ENCODE measurements at regions of chr1 and their contacts with region 1.

Region 1: DNA sequence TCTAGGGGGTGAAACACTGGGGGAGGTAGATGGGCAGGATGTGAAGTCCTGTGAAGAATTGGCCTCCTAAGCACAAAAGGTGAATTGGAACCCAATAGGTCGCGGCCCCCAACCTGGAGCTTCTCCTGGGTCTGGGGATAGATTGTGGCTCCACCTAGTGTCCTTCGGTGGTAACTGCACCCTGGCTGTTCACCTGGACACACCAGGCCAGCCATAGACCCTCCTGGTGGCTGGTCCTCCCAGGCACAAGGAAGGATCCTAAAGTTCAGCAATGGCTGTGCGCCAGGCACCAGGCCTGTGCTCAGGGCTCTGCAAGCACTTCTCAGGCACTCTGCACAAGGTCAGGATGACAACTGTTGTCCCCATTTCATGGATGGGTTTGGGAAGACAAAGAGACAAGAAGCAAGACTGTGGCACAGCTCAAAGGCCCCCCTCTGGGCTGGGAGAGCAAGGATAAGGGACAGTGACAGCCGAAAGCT is 13.5 kb downstream of the ESPN start:
- H3K4me3 ChIP-seq: no peak overlapping the region
- H3K27ac ChIP-seq: no peak overlapping the region
- H3K4me1 ChIP-seq: no peaks in the 10 kb centered on the region
- CTCF ChIP-seq: peak; percentile 77

Region 2: DNA sequence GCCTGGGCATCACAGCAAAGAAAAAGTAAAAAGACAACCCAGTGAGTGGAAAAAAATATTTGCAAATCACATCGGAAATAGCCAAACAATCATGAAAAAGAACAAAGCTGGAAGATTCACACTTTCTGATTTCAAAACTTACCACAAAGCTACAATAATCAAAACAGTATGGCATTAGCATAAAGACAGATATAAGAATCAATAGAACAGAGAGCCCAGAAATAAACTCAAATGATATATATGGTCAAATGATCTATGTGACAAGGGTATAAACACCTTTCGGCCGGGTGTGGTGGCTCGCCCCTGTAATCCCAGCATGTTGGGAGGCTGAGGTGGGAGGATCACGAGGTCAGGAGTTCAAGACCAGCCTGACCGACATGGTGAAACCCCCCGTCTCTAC is 58.0 kb before region 1 on chr1:
- CTCF ChIA-PET with region 1: no interaction called
- POLR2A ChIA-PET with region 1: no interaction called
- H3K4me3 ChIP-seq: no peak overlapping the region
- H3K27ac ChIP-seq: no peak overlapping the region
- H3K4me1 ChIP-seq: no peaks in the 10 kb centered on the region
- CTCF ChIP-seq: no peak

Region 3: DNA sequence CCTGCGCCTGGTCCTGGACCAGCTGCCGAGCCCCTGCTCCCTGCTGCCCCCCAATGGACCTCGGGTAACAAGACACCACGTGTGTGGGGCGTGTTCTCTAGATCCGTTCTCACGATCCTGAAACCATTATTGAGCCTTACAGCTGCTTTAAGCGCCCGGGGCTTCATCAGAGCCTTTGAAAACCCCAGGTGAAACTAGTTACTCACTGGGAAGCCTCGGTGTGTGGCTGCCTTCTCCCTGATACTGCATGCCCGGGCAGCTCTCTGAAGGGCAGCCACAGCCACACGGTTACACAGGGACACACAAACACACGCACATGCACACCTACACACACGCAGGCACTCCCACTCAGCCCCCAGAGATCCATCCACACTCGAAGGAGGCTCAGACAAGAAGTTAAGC is 23.6 kb before region 1 on chr1:
- CTCF ChIA-PET with region 1: interaction called, 117 read pairs
- POLR2A ChIA-PET with region 1: no interaction called
- H3K4me3 ChIP-seq: no peak overlapping the region
- H3K27ac ChIP-seq: peak overlapping the region; percentile 26; the same call in 1 of the 2 replicates
- H3K4me1 ChIP-seq: no peaks in the 10 kb centered on the region; the same call in 1 of the 2 replicates
- CTCF ChIP-seq: peak; percentile 84

Region 4: DNA sequence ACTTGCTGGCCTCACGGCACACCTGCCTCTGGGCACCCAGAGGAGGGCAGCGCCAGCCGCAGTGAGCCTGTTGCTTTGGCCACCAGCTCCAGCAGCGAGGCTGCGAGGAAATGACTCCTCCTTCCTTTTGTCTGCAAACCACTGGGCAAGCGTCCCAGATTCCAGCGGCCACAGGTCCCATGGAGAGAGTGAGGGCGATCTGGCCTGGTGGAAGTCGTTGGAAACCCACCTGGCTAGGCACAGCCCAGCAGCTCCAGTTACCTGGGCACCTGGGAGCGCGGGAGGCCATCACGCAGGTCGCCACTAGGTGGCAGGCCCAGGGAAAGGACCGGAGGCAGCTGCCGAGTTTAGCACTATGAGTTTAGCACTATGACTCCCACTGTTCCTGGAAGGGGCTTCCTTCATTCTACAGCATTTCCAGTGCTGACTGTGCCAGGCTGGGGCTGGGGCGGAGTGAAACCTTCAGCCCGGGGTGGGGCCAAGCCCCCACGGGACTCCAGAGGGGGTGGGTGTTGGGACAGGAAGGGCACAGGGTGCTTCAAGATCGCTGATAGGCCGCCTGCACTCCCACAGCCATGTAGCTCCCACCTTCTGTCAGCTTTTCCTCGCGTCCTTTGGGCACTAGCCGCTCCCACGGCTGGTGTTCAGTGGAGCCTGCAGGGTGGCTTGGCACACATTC is 14.6 kb before region 1 on chr1:
- CTCF ChIA-PET with region 1: interaction called, 117 read pairs
- POLR2A ChIA-PET with region 1: no interaction called
- H3K4me3 ChIP-seq: no peak overlapping the region
- H3K27ac ChIP-seq: no peak overlapping the region
- H3K4me1 ChIP-seq: no peaks in the 10 kb centered on the region; the same call in 1 of the 2 replicates
- CTCF ChIP-seq: peak; percentile 89

Region 5: GRCh38 chr1:6732942-6733341 is 294.9 kb after region 1 on chr1:
- CTCF ChIA-PET with region 1: no interaction called
- POLR2A ChIA-PET with region 1: no interaction called
- H3K4me3 ChIP-seq: no peak overlapping the region
- H3K27ac ChIP-seq: no peak overlapping the region
- H3K4me1 ChIP-seq: no peaks in the 10 kb centered on the region
- CTCF ChIP-seq: no peak

Region 6: GRCh38 chr1:6770751-6771440 is 332.8 kb after region 1 on chr1:
- CTCF ChIA-PET with region 1: no interaction called
- POLR2A ChIA-PET with region 1: no interaction called
- H3K4me3 ChIP-seq: no peak overlapping the region
- H3K27ac ChIP-seq: no peak overlapping the region
- H3K4me1 ChIP-seq: no peaks in the 10 kb centered on the region
- CTCF ChIP-seq: no peak

Measured in HEK293 (cell line).